Activated T-helper 2 cell treated with anti-CD3 and anti-CD28 coated beads, Interferon-gamma antibody, Interleukin-2, Interleukin-4, amounts not matched to agents 10 μg/mL and 5 μg/mL and 100 μg/mL, durations not matched to agents 14 hours and 24 hours and 36 hours (primary cell): ENCODE measurements at regions of chr14 and their contacts with region 1.

Region 1: DNA sequence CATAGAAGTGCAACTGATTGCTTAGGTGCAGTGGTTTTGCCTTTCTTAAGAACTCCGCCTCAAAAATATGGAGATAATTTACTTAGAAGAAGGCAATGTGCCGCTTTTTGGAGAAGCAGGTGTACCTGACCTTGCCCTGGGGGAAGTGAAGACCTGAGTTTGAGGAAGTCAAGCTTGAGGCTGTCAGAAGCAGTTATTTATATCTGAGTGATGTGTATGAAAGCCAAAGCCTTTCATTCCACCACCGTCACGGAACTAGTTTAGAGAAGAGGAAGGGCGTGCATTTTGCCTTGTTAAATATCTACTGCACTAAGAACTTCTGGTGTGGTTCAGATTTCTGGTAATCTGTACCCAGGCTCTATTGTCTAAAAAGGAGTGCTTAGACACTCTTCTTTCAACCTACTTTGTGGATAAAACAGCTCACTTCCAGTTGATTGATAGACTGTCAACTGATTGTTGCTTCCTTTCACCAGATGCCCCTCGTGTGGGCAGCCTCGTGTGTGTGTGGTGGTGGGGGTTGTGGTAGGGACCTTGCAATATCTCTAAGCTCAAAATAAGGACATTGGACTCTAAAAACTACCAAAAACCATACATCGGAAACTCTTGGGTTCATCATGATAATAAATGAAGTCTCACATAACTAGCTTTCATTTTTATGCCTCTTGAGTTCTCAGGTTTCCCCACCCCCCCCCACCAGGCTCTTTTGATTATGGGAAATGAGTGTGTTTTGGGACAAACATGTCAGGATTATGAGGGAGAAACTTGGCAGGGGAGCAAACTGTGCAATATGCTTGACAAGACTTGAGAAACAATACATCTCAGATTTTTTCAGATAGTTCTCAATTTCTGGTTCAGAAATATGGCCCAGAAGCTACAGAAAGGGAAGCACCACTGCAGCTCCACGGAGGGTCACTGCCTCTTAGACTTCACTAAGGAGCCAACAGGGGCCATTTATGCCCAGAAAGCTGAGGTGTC is 78.6 kb downstream of the ARF6 start:
- DNase-seq: peak; percentile 42
- H3K4me3 Mint-ChIP-seq: peak overlapping the region; percentile 77
- H3K27ac Mint-ChIP-seq: peak overlapping the region; percentile 99
- H3K4me1 Mint-ChIP-seq: peaks cover 46% of the 10 kb centered on the region
- H3K27me3 Mint-ChIP-seq: no peaks in the 10 kb centered on the region

Region 2: GRCh38 chr14:49934646-49935045 is 36.8 kb before region 1 on chr14:
- intact Hi-C with region 1: no loop called
- DNase-seq: no peak
- H3K4me3 Mint-ChIP-seq: no peak overlapping the region
- H3K27ac Mint-ChIP-seq: no peak overlapping the region
- H3K4me1 Mint-ChIP-seq: peaks cover 14% of the 10 kb centered on the region
- H3K27me3 Mint-ChIP-seq: no peaks in the 10 kb centered on the region

Region 3: GRCh38 chr14:49946320-49947141 is 24.9 kb before region 1 on chr14:
- intact Hi-C with region 1: loop called (anchors 2 kb)
- DNase-seq: no peak
- H3K4me3 Mint-ChIP-seq: peak overlapping the region; percentile 42
- H3K27ac Mint-ChIP-seq: peak overlapping the region; percentile 73
- H3K4me1 Mint-ChIP-seq: peaks cover 57% of the 10 kb centered on the region
- H3K27me3 Mint-ChIP-seq: no peaks in the 10 kb centered on the region

Region 4: GRCh38 chr14:49959822-49960408 is 11.5 kb before region 1 on chr14:
- intact Hi-C with region 1: loop called (anchors 1 kb)
- DNase-seq: no peak
- H3K4me3 Mint-ChIP-seq: no peak overlapping the region
- H3K27ac Mint-ChIP-seq: peak overlapping the region; percentile 38
- H3K4me1 Mint-ChIP-seq: peaks cover 42% of the 10 kb centered on the region
- H3K27me3 Mint-ChIP-seq: no peaks in the 10 kb centered on the region

Region 5: GRCh38 chr14:49984424-49984823 is 13.0 kb after region 1 on chr14:
- intact Hi-C with region 1: loop called (anchors 1 kb)
- DNase-seq: no peak
- H3K4me3 Mint-ChIP-seq: no peak overlapping the region
- H3K27ac Mint-ChIP-seq: peak overlapping the region; percentile 82
- H3K4me1 Mint-ChIP-seq: peaks cover 31% of the 10 kb centered on the region
- H3K27me3 Mint-ChIP-seq: no peaks in the 10 kb centered on the region

Region 6: GRCh38 chr14:49992901-49993335 is 21.5 kb after region 1 on chr14:
- intact Hi-C with region 1: loop called (anchors 1 kb)
- DNase-seq: no peak
- H3K4me3 Mint-ChIP-seq: peak overlapping the region; percentile 67
- H3K27ac Mint-ChIP-seq: peak overlapping the region; percentile 89
- H3K4me1 Mint-ChIP-seq: peaks cover 37% of the 10 kb centered on the region
- H3K27me3 Mint-ChIP-seq: no peaks in the 10 kb centered on the region

Region 7: DNA sequence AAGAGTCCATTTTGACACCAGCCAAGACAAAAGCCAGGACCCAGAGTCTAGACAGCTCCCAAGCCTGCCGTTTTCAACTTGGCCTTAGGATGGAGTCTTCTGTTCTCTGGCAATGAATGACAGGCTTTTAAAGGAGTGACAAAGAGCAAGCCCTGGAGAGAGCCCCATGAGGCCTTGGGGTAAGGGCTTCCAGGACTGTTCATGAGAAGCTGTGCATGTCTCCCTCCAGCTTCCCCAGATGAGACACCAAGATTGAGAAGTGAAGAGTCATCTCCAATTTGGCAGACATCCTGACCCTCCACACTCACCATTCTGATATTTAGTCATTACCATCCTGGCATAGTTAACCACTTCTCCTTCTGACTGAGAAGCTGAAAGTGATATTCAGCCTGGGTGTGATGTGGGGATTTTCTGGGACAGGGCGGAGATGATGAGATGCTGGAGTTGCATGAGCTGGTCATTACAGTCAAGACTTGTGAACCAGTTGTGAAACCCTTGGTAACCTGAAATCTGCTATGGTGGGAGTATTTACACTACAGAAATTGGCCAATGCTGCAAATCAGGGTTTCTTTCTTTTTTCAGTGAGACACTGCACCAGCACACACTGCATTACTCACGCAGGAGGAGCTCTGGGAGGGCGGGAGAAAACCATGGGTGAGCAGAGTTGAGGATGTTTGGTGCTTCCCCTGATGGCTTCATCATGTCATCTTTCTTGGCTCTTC is 67.1 kb after region 1 on chr14:
- intact Hi-C with region 1: loop called (anchors 1 kb)
- DNase-seq: peak; percentile 58
- H3K4me3 Mint-ChIP-seq: peak overlapping the region; percentile 68
- H3K27ac Mint-ChIP-seq: peak overlapping the region; percentile 97
- H3K4me1 Mint-ChIP-seq: peaks cover 48% of the 10 kb centered on the region
- H3K27me3 Mint-ChIP-seq: no peaks in the 10 kb centered on the region

Region 8: GRCh38 chr14:50082784-50083466 is 111.5 kb after region 1 on chr14:
- intact Hi-C with region 1: loop called (anchors 1 kb)
- DNase-seq: peak; percentile 81
- H3K4me3 Mint-ChIP-seq: peak overlapping the region; percentile 49
- H3K27ac Mint-ChIP-seq: peak overlapping the region; percentile 91
- H3K4me1 Mint-ChIP-seq: peaks cover 62% of the 10 kb centered on the region
- H3K27me3 Mint-ChIP-seq: no peaks in the 10 kb centered on the region